ENCODE measurements at regions of chr1 and their contacts with region 1.

Region 1: GRCh38 chr1:23691499-23692307 is at the start of gene RPL11:
- DNase-seq: peak; percentile 79
- H3K4me3 ChIP-seq: peak within 1 kb of the TSS; percentile 79
- H3K27me3 ChIP-seq: no peaks in the 10 kb centered on the region; the same call in 1 of the 2 replicates
- CTCF ChIP-seq: peak; percentile 84
- polyA plus RNA-seq, gene RPL11: 1,288 and 1,806 TPM in 2 replicates

Region 2: GRCh38 chr1:23743287-23744052 is 51.8 kb after region 1 on chr1 and contains the start of gene ELOA:
- CTCF ChIA-PET with region 1: interaction called, 14 read pairs
- POLR2A ChIA-PET with region 1: no interaction called
- DNase-seq: no peak
- H3K4me3 ChIP-seq: peak within 1 kb of the TSS; percentile 92
- H3K27me3 ChIP-seq: no peaks in the 10 kb centered on the region
- CTCF ChIP-seq: no peak
- polyA plus RNA-seq, gene ELOA: 21.5 and 24.5 TPM in 2 replicates